Esophagus muscularis mucosa (tissue), 4 donors: ENCODE measurements at regions of chr22 and their contacts with region 1.

Region 1: DNA sequence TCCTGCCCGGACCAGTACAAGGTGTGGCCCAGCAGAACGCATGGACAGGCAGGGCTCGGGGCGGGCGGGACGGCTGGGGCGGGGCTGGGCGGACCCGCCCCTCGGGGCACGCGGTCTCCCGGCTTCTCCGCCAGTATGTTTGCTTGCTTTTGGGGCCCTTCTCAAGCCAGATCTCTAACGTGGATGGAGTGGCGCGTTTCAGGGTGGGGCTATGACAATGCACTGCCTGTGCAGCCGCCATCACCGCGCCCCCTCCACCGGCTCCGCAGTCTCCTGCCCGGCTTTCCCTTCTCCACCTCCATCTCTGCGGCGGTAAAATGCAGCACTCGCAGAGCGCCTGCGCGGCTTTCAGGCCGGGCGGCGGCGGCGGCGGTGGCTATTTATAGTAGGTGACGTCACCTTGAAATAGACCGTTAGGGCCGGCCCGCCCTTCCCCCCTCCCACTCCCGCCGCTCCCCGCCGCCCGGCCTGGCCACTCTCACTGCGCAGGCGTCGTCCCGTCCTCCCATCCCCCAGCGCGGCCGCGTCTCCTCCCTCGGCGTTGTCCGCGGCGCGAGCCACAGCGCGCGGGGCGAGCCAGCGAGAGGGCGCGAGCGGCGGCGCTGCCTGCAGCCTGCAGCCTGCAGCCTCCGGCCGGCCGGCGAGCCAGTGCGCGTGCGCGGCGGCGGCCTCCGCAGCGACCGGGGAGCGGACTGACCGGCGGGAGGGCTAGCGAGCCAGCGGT is at the start of gene YWHAH:
- DNase-seq: peak; percentile 98
- H3K4me3 ChIP-seq: peak within 1 kb of the TSS; percentile 81 to 99 (median 92)
- H3K27ac ChIP-seq: peak within 1 kb of the TSS; percentile 97 to 99 (median 99)
- H3K4me1 ChIP-seq: peaks cover 23 to 41% (median 39%) of the 10 kb centered on the region in 4 donors
- H3K27me3 ChIP-seq: no peaks in the 10 kb centered on the region
- CTCF ChIP-seq: no peak
- EP300 ChIP-seq: no peak
- POLR2A ChIP-seq: no peak
- total RNA-seq, gene YWHAH: 132 to 232 (median 183) TPM

Region 2: GRCh38 chr22:31661851-31662656 is 282.1 kb before region 1 on chr22 and contains the start of gene PISD:
- intact Hi-C with region 1: loop called (anchors 10 kb)
- DNase-seq: peak; percentile 98
- H3K4me3 ChIP-seq: peak within 1 kb of the TSS; percentile 83 to 95 (median 93)
- H3K27ac ChIP-seq: peak within 1 kb of the TSS; percentile 72 to 80 (median 73)
- H3K4me1 ChIP-seq: peaks cover 15 to 24% (median 21%) of the 10 kb centered on the region in 4 donors
- H3K27me3 ChIP-seq: no peaks in the 10 kb centered on the region
- CTCF ChIP-seq: no peak
- EP300 ChIP-seq: no peak
- POLR2A ChIP-seq: no peak
- total RNA-seq, gene PISD: 14.1 to 40.1 (median 26.2) TPM

Region 3: DNA sequence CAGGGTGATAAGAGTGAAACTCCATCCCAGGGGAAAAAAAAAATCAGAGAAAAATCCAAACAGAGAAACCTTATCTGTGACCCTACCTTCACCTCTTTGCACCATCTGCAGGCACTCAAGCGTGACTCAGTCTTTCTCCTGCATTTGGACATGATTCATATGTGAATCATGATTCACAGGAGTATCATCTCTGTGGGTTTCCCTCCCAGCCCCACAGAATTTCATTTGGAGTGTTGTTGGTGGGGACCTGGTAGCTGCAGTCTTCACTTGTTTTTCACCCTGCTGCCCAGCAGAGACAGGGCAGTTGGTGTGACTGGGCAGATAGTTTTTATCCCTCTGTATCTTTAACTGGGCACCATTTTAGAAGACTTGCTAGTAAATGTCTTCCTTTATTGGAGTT is 114.6 kb before region 1 on chr22:
- intact Hi-C with region 1: no loop called
- DNase-seq: no peak
- H3K4me3 ChIP-seq: no peak overlapping the region
- H3K27ac ChIP-seq: no peak overlapping the region
- H3K4me1 ChIP-seq: no peaks in the 10 kb centered on the region
- H3K27me3 ChIP-seq: no peaks in the 10 kb centered on the region
- CTCF ChIP-seq: no peak
- EP300 ChIP-seq: no peak
- POLR2A ChIP-seq: no peak